AG04449 (cell line): ENCODE measurements at regions of chr22 and their contacts with region 1.

Region 1: DNA sequence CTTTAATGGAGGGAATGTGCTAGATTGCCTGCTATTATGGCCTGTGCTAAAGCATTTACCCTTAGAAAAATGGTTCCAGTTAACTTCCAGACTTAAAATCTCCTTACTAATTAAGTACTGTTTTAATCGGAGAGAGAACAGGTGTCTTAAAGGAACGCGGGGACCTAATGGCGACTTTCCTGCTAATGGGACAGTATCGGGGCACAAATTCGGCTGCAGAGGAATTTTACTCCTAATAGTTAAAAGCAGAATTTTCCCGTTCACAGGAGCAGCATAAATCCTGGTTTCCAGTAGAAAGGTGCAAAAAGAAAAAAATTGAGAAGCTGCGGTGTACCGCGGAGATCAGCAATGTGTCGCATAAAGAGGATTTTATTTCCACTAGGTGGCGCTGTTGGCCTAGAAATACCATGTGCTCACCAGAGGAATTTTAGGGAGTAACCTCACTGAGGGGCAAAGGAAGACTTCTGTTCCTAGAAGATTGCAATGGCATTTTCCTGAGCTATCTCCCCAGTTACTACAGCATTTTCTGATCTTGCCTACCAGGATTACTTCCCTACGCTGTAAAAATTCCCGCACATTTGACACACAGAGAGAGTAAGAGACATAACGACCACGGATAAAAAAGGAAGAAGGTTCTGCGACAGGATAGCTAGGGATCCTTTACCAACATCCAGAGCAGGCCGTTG is 44.5 kb downstream of the ZNF280B start:
- DNase-seq: no peak
- H3K4me3 ChIP-seq: no peak overlapping the region
- CTCF ChIP-seq: peak; percentile 49

Region 2: DNA sequence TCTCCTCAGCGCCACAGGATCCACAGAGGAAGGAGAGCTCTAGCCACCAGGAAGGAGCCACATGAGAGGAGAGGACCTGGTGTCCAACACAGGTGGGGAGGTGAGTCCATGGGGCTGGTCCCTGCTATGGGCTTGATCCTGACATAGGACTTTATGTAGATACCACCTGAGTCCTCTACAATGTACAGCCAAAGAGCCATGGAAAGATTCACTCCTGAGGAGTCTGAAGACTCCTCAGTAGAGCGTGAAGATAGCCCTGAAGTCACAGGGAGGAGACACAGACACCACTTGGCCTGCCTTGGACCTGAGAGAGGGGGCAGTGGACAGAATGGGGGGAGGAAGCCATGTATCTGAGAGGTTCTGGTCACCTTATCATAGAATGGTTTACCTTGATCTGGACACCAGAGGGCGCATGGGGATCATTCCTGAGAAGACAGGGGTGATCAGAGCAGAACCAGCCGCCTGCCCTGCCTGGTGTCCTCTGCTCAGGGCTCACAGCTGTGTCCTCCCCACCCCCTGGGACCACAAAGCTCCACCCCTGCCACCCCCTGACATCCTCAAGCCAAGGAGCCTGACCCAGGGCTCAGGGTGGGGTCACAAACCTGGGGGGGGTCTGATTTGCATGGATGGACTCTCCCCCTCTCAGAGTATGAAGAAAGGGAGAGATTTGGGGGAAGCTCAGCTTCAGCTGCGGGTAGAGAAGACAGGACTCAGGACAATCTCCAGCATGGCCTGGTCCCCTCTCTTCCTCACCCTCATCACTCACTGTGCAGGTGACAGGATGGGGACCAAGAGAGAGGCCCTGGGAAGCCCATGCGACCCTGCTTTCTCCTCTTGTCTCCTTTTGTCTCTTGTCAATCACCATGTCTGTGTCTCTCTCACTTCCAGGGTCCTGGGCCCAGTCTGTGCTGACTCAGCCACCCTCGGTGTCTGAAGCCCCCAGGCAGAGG is 32.5 kb before region 1 on chr22:
- CTCF ChIA-PET with region 1: interaction called, 15 read pairs
- POLR2A ChIA-PET with region 1: no interaction called
- DNase-seq: no peak
- H3K4me3 ChIP-seq: no peak overlapping the region
- CTCF ChIP-seq: peak; percentile 77

Region 3: DNA sequence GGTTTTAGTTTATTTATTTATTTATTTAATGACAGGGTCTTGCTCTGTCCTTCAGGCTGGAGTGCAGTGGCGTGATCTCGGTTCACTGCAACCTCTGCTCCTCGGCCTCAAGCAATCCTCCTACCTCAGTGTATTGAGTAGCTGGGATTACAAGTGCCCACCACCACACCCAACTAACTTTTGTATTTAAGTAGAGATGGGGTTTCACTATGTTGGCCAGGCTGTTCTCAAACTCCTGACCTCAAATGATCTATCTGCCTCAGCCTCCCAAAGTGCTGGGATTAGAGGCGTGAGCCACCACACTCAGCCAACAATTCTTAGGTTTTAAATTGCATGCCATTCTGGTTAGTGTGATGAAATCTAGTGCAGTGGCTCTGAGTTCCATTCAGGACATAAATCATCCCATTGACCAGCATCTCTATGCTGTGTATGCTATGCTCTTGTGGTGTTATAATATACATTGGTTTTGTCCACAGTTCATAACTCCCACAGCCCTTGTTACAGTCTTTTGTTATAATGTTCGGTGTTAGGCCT is 16.1 kb after region 1 on chr22:
- CTCF ChIA-PET with region 1: interaction called, 36 read pairs
- POLR2A ChIA-PET with region 1: no interaction called
- DNase-seq: no peak
- H3K4me3 ChIP-seq: no peak overlapping the region
- CTCF ChIP-seq: no peak

Region 4: DNA sequence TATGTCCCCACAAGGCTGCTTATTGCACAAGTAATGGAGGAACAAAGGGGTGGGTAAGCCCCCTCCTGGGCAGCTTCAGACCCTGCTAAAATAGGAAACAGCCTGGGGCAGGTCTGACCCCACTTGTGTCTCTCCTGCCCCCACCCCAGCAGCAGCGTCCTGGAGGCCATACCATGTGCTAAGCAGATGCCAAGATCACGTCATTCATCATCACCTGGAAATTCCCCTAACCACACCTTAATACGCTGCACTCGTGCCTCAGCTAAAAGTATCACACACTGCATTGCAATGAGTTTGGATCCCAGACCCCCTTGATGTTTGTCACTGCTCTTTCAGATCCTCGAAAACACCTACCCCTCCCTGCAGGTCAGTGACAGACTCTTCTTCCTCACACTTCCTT is 152.6 kb after region 1 on chr22:
- CTCF ChIA-PET with region 1: no interaction called
- POLR2A ChIA-PET with region 1: no interaction called
- DNase-seq: no peak
- H3K4me3 ChIP-seq: no peak overlapping the region
- CTCF ChIP-seq: no peak